ENCODE measurements at regions of chr12 and their contacts with region 1.

Region 1: DNA sequence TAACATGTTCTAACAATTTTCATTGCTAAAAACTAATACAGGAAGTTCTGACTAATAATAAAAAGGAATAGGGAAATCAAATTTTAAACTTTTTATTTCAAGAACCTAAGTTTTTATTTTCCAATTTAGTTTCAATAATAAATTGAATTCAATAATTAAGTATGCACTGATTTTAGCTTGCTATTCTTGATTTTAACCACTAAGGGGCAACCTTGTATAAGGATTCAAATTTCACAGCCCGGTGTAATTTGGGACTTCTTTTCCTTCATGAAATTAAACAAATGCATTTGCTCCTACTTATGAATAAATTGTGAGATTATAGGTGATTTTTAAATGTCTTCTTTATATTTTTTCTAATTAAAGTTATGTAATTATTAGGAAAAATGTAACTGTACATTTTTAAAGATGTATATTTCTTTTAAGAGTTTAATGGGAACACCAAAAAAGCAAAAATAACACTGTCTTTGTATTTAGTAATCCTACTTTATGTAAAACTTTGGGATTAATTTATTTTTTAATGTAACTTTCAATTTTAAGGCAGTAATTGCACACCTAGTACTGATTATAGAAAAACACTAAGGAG is 241.4 kb upstream of the PDZRN4 start:
- DNase-seq: peak; percentile 24 to 32 (median 30)
- ATAC-seq: no peak
- H3K4me3 ChIP-seq: no peak overlapping the region
- H3K27ac ChIP-seq: no peak overlapping the region
- H3K4me1 ChIP-seq: no peaks in the 10 kb centered on the region
- H3K27me3 ChIP-seq: no peaks in the 10 kb centered on the region
- CTCF ChIP-seq: peak; percentile 15 to 70 (median 25); a peak in 3 of 6 replicates
- EP300 ChIP-seq: no peak
- POLR2A ChIP-seq: no peak
- RAD21 ChIP-seq: peak; percentile 67

Region 2: DNA sequence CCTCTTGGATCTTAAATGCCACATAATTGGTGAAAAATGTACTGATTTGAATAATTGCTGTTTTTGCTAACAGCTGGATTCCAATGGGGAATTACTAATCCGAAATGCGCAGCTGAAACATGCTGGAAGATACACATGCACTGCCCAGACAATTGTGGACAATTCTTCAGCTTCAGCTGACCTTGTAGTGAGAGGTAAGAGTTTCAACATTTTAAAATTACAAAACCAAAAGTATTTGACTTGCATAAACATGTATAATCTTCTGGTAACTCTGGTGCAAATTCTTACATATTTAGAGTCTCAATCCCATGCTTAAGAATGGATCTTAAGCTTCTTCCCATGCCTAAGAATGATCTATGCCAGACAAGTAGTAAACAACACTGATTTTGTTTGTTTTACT is 12.3 kb after region 1 on chr12:
- CTCF ChIA-PET with region 1: no interaction called
- POLR2A ChIA-PET with region 1: no interaction called
- in situ Hi-C with region 1: no loop called
- intact Hi-C with region 1: no loop called
- DNase-seq: no peak
- ATAC-seq: no peak
- H3K4me3 ChIP-seq: no peak overlapping the region
- H3K27ac ChIP-seq: no peak overlapping the region
- H3K4me1 ChIP-seq: no peaks in the 10 kb centered on the region
- H3K27me3 ChIP-seq: no peaks in the 10 kb centered on the region
- CTCF ChIP-seq: no peak
- EP300 ChIP-seq: no peak
- POLR2A ChIP-seq: no peak
- RAD21 ChIP-seq: no peak

Region 3: DNA sequence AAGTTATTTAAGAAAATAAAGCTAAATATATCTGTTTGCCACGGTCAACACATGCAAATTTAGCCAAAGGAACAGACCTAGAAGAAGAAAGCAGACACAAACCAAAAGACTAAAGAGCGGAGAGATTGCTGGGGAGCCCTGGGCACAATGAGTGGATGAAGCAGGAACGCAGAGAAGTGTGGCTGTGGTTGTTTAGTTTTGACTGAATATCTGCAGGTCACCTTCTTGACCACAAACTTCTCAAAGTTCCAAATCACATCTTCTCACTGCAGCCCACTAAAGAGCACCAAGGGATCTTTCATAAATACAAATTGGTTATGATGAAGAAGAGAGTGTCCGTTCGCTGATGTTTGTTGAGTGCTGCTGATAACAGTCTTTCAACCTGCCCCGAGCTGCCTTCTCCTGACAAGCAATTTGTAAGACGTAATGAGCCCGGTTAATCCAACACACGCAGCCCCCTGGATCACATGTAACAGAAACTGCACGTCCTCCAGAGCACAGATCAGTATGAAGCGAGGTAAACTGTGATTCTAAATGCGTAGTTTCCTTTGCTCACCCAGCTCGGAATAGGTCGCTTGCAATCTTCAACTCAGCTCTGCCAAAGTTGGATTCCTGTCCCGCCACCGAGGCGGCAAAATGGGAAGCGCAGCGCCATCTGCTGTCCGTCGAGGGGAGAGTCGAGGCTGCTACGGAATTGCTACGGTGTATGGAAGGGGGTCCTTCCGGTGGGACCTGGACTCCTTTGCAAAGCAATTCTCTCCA is 1077.2 kb after region 1 on chr12:
- CTCF ChIA-PET with region 1: no interaction called
- POLR2A ChIA-PET with region 1: no interaction called
- in situ Hi-C with region 1: no loop called
- intact Hi-C with region 1: loop called (anchors 1 kb)
- DNase-seq: peak; percentile 63 to 77 (median 66)
- ATAC-seq: peak; percentile 97
- H3K4me3 ChIP-seq: no peak overlapping the region
- H3K27ac ChIP-seq: no peak overlapping the region
- H3K4me1 ChIP-seq: no peaks in the 10 kb centered on the region
- H3K27me3 ChIP-seq: peaks cover 0 to 7% of the 10 kb centered on the region in 2 experiments; a peak in 1 of 5 replicates
- CTCF ChIP-seq: peak; percentile 83 to 96 (median 87)
- EP300 ChIP-seq: no peak
- POLR2A ChIP-seq: no peak
- RAD21 ChIP-seq: peak; percentile 77 to 87

Region 4: DNA sequence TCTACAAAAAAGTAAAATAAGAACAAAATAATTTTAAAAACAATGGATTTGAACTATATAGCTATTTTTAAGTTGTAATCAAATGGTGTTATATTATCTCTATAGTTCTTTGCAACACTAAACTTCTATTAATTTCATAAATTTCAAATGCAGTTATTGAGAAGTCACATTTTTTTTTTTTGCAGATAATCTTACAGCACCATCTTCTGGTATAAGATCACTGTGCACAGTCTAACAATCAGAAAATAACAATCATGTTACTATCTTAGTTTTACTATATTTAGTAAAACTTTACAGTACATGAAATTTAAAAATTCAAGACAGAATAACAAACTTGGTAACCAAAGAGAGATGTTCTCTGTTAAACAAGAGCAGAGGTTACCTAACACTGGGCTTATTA is 1157.4 kb after region 1 on chr12:
- CTCF ChIA-PET with region 1: no interaction called
- POLR2A ChIA-PET with region 1: no interaction called
- in situ Hi-C with region 1: no loop called
- intact Hi-C with region 1: loop called (anchors 10 kb)
- DNase-seq: no peak
- ATAC-seq: 0 out of 3 replicates have a peak, but pooled peaks have one; percentile 31
- H3K4me3 ChIP-seq: no peak overlapping the region
- H3K27ac ChIP-seq: no peak overlapping the region
- H3K4me1 ChIP-seq: no peaks in the 10 kb centered on the region
- H3K27me3 ChIP-seq: no peaks in the 10 kb centered on the region
- CTCF ChIP-seq: peak in 1 of 3 experiments; percentile 47; a peak in 1 of 6 replicates
- EP300 ChIP-seq: no peak
- POLR2A ChIP-seq: no peak
- RAD21 ChIP-seq: peak in 1 of 2 experiments; percentile 43; a peak in 2 of 4 replicates

Region 5: GRCh38 chr12:42469355-42470175 is 1522.9 kb after region 1 on chr12:
- CTCF ChIA-PET with region 1: no interaction called
- POLR2A ChIA-PET with region 1: no interaction called
- in situ Hi-C with region 1: no loop called
- intact Hi-C with region 1: loop called (anchors 10 kb)
- DNase-seq: no peak
- ATAC-seq: peak; percentile 51
- H3K4me3 ChIP-seq: no peak overlapping the region
- H3K27ac ChIP-seq: no peak overlapping the region
- H3K4me1 ChIP-seq: peaks cover 0 to 11% of the 10 kb centered on the region in 2 experiments; a peak in 3 of 5 replicates
- H3K27me3 ChIP-seq: no peaks in the 10 kb centered on the region
- CTCF ChIP-seq: no peak
- EP300 ChIP-seq: no peak
- POLR2A ChIP-seq: no peak
- RAD21 ChIP-seq: no peak

Region 6: DNA sequence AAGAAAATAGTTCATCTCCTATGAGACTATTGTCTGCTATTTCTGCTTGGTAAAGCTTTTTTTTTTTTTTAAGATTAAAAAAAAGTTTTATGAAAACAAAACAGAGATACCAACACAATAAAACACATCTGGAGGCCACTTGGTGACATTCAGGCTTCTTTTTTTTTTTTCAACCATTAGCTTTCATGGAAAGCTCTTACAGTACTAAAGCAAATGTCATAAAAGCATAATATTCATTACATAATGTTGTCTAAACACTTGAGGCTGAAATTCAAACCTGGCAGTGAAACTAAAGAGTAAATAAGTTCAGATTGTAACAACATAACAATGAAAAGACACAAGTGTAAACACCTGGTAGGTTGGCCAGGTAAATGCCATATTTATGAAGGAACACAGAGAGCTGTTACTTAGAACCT is 1628.2 kb after region 1 on chr12:
- CTCF ChIA-PET with region 1: no interaction called
- POLR2A ChIA-PET with region 1: no interaction called
- in situ Hi-C with region 1: loop called (anchors 10 kb)
- intact Hi-C with region 1: no loop called
- DNase-seq: no peak
- ATAC-seq: no peak
- H3K4me3 ChIP-seq: no peak overlapping the region
- H3K27ac ChIP-seq: no peak overlapping the region
- H3K4me1 ChIP-seq: no peaks in the 10 kb centered on the region
- H3K27me3 ChIP-seq: peaks cover 0 to 4% of the 10 kb centered on the region in 2 experiments; a peak in 1 of 5 replicates
- CTCF ChIP-seq: no peak
- EP300 ChIP-seq: no peak
- POLR2A ChIP-seq: no peak
- RAD21 ChIP-seq: no peak